ENCODE measurements at regions of chr17 and their contacts with region 1.

Region 1: GRCh38 chr17:50944054-50944901 is 78.1 kb upstream of the TOB1 start:
- DNase-seq: peak; percentile 88
- ATAC-seq: peak; percentile 89
- H3K4me3 Mint-ChIP-seq: peak overlapping the region; percentile 71
- H3K27ac Mint-ChIP-seq: peak overlapping the region; percentile 81
- H3K4me1 Mint-ChIP-seq: peaks cover 23% of the 10 kb centered on the region
- H3K27me3 Mint-ChIP-seq: no peaks in the 10 kb centered on the region

Region 2: DNA sequence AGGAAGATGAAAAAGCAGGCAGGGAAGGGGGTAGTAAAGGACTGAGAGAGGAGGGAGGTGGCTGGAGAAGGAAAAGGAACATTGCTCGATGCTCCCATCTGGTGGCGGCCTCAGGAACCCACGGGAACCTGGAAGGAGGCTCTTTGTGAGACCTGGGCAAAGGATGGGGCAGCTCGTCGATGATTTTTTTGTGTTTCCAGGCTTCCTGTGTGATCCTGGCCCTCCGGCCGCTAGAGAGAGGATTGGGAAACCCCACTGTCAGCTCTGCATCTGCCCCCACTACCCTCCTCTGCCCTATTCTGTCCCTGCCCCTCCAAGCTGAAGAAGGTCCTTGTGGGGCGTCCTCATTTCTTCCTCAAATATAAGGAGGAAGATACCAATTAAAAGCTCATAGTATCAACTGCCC is 102.3 kb before region 1 on chr17:
- CTCF ChIA-PET with region 1: no interaction called
- POLR2A ChIA-PET with region 1: no interaction called
- intact Hi-C with region 1: no loop called
- DNase-seq: peak; percentile 77
- ATAC-seq: peak; percentile 85
- H3K4me3 Mint-ChIP-seq: no peak overlapping the region
- H3K27ac Mint-ChIP-seq: no peak overlapping the region
- H3K4me1 Mint-ChIP-seq: no peaks in the 10 kb centered on the region
- H3K27me3 Mint-ChIP-seq: no peaks in the 10 kb centered on the region

Region 3: DNA sequence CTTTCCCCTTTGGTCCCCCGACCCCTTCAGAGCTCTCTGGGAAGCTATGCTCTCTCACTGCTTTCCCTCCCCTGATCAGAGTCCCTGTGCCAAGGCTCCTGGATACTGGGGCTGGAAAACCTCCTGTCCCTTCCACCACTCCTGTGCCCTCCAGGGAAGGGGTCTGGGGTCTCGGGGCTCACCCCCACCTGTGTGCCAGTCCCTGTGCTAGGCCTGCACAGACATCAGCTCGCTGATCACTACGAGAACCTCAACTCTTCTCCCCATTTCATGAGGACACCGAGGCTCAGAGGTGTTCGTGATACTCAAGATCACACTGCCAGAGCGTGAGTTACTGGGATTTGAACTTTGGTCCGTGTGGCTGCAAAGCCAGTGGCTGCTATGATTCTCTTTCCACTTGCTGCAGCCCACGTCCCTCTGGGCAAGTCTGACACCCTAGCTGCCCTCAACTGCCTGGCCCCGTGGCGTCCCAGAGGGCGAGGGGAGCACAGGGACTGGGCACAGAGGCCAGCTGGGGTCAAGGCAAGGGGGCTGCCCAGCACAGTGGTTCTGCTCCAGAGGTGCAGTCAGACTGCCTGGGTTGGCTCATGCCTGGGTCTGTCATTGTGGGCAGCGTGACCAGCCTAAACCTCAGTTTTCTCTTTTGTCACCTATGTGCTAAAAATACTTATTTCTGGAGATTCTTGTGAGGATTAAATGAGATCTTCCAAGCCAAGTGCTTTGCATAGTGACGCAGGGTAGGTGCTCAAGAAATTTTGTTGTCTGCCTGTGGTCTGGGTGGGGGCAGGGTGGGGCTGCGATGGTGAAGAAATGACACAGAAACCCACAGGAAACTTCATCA is 34.3 kb before region 1 on chr17:
- CTCF ChIA-PET with region 1: interaction called, 3 read pairs
- POLR2A ChIA-PET with region 1: no interaction called
- intact Hi-C with region 1: loop called (anchors 2 to 5 kb)
- DNase-seq: peak; percentile 91
- ATAC-seq: peak; percentile 88
- H3K4me3 Mint-ChIP-seq: no peak overlapping the region
- H3K27ac Mint-ChIP-seq: peak overlapping the region; percentile 81
- H3K4me1 Mint-ChIP-seq: peaks cover 64% of the 10 kb centered on the region
- H3K27me3 Mint-ChIP-seq: no peaks in the 10 kb centered on the region

Region 4: DNA sequence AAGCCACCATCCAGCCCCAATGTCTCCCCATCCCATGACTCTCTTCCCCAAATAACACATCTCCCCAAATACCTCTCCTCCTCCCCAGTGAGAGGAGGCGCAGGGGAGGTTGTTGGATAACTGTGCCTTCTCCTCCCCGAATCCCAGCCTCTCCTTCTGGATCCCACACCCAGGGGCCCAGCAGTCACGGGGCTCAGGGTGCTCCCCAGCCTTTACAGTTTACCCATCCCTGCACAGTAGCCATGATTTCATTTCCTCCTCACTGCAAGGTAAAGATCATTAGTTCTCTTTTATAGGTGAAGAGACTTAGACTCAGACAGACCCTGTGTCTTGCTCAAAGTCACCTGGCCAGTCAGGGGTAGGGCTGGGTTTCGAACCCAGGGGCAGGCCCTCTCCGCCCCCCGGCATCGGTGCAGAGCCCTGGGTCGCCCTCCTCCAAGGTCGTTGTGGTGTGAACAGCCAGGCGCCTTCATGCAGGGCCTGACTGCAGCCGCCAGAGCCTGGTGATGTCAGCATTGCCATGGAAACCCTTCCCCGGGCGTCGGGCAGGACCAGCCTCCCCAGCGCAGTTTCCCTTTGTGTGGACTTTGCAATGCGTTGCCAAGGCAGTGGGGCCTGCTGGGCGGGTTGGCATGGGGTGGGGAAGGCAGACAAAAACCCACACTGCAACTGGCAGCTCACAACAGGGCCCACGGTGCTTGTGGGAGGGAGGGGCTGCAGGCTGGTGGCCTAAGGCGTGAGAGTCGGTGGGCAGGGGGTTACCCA is 24.8 kb before region 1 on chr17:
- CTCF ChIA-PET with region 1: interaction called, 4 read pairs
- POLR2A ChIA-PET with region 1: no interaction called
- intact Hi-C with region 1: loop called in 1 of 2 experiments (anchors 2 kb)
- DNase-seq: peak; percentile 90
- ATAC-seq: peak; percentile 87
- H3K4me3 Mint-ChIP-seq: peak overlapping the region; percentile 34
- H3K27ac Mint-ChIP-seq: peak overlapping the region; percentile 85
- H3K4me1 Mint-ChIP-seq: peaks cover 34% of the 10 kb centered on the region
- H3K27me3 Mint-ChIP-seq: no peaks in the 10 kb centered on the region

Region 5: DNA sequence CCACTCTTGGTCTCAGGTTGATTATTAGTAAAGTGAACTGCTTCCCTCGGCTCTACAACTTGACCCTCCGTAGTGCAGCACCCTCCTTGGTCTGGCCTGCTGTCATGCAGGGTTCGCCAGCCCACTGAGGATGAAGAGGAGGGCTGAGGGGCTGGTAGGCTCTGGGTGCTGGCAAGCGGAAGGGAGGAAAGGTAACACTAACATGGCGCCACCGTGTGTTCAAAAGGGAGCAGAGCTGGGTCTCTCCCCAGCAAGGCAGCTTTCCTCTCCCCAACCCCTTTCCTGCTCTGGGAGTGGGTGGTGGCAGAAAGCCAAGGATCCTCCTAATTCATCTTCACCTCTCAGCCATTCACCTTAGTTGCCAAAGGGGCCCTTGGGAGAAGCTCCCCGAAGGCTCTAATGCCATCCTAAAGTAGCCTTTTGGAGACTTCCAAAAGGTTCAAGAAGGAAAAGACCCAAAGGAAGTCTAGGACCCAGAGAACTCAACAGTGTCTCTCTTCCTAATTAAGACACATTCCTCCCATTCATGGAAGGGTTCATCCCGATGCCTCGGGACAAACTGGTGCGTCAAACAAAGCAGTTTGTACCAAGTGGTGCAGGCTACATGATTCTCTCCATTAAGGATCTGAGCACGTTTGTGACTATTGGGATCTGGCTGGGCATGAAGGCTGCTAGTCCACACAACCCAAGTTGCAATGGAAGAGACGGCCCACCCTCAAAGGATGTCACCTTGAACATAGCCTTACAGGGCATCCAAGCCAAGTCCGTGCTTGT is 12.7 kb after region 1 on chr17:
- CTCF ChIA-PET with region 1: interaction called, 10 read pairs
- POLR2A ChIA-PET with region 1: interaction called, 3 read pairs
- intact Hi-C with region 1: no loop called
- DNase-seq: peak; percentile 80
- ATAC-seq: peak; percentile 98
- H3K4me3 Mint-ChIP-seq: no peak overlapping the region
- H3K27ac Mint-ChIP-seq: no peak overlapping the region
- H3K4me1 Mint-ChIP-seq: peaks cover 2% of the 10 kb centered on the region
- H3K27me3 Mint-ChIP-seq: no peaks in the 10 kb centered on the region